ENCODE measurements at regions of chr12 and their contacts with region 1.

Region 1: GRCh38 chr12:26097046-26097878 is 27.6 kb downstream of the BHLHE41 start:
- DNase-seq: peak; percentile 73
- H3K4me3 Mint-ChIP-seq: no peak overlapping the region
- H3K27ac Mint-ChIP-seq: no peak overlapping the region
- H3K4me1 Mint-ChIP-seq: no peaks in the 10 kb centered on the region
- H3K27me3 Mint-ChIP-seq: peaks cover 8% of the 10 kb centered on the region

Region 2: GRCh38 chr12:25979563-25979962 is 117.7 kb before region 1 on chr12:
- CTCF ChIA-PET with region 1: no interaction called
- intact Hi-C with region 1: no loop called
- DNase-seq: no peak
- H3K4me3 Mint-ChIP-seq: no peak overlapping the region
- H3K27ac Mint-ChIP-seq: no peak overlapping the region
- H3K4me1 Mint-ChIP-seq: no peaks in the 10 kb centered on the region
- H3K27me3 Mint-ChIP-seq: peaks cover 11% of the 10 kb centered on the region

Region 3: GRCh38 chr12:25997201-25997963 is 99.9 kb before region 1 on chr12:
- CTCF ChIA-PET with region 1: no interaction called
- intact Hi-C with region 1: no loop called
- DNase-seq: no peak
- H3K4me3 Mint-ChIP-seq: no peak overlapping the region
- H3K27ac Mint-ChIP-seq: no peak overlapping the region
- H3K4me1 Mint-ChIP-seq: no peaks in the 10 kb centered on the region
- H3K27me3 Mint-ChIP-seq: peaks cover 6% of the 10 kb centered on the region

Region 4: GRCh38 chr12:26396402-26396801 is 299.1 kb after region 1 on chr12:
- CTCF ChIA-PET with region 1: no interaction called
- intact Hi-C with region 1: loop called (anchors 5 kb)
- DNase-seq: no peak
- H3K4me3 Mint-ChIP-seq: no peak overlapping the region
- H3K27ac Mint-ChIP-seq: no peak overlapping the region
- H3K4me1 Mint-ChIP-seq: no peaks in the 10 kb centered on the region
- H3K27me3 Mint-ChIP-seq: no peaks in the 10 kb centered on the region

Region 5: GRCh38 chr12:26460361-26460760 is 363.1 kb after region 1 on chr12:
- CTCF ChIA-PET with region 1: no interaction called
- intact Hi-C with region 1: no loop called
- DNase-seq: no peak
- H3K4me3 Mint-ChIP-seq: no peak overlapping the region
- H3K27ac Mint-ChIP-seq: no peak overlapping the region
- H3K4me1 Mint-ChIP-seq: no peaks in the 10 kb centered on the region
- H3K27me3 Mint-ChIP-seq: no peaks in the 10 kb centered on the region

Region 6: DNA sequence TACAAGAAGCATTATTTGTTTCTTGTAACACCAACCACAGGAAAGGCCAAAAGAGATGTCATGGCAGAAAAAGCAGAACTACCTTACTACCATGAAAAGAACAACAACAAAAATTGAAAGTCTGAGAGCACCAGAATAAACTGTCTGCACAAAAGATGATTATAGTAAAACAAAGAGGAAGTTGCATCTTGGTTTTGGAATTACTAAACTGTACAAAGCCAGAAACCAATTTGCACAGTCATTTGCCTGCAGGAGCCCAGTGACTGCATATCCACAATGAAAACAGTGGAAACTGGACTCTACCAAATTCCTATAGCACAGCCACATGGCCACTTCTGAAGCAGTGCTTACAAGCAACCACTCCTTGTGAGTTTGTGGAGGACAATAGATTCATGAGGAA is 374.3 kb after region 1 on chr12:
- CTCF ChIA-PET with region 1: no interaction called
- intact Hi-C with region 1: loop called (anchors 1 kb)
- DNase-seq: peak; percentile 39
- H3K4me3 Mint-ChIP-seq: no peak overlapping the region
- H3K27ac Mint-ChIP-seq: peak overlapping the region; percentile 33
- H3K4me1 Mint-ChIP-seq: peaks cover 12% of the 10 kb centered on the region
- H3K27me3 Mint-ChIP-seq: no peaks in the 10 kb centered on the region

Region 7: DNA sequence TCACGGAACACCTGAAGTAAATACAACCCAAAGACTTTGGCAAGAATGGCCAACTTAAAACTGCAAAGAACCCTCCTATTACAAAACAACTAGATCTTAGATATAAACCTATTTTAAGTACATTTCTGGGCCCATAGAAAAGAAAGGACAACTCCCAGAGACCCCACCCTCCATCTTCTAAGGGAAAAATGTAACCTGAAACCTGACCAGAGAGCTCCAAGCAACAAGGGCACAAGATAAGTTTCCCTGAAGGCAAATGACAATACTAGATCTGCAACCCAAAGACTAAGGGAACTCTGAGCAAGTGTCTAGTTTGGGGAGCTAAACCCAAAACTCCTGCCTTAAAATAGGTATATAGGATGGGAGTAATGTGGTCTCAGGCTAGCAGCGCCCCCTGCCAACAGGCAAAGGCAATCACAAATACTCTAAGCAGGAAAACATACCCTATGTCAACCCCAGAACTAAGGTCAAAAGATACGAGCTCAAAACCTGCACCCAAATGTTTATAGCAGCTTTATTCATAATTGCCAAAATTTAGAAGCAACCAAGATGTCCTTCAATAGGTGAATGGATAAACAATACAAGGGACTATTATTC is 516.9 kb after region 1 on chr12:
- CTCF ChIA-PET with region 1: no interaction called
- intact Hi-C with region 1: loop called (anchors 1 kb)
- DNase-seq: peak; percentile 51
- H3K4me3 Mint-ChIP-seq: no peak overlapping the region
- H3K27ac Mint-ChIP-seq: no peak overlapping the region
- H3K4me1 Mint-ChIP-seq: no peaks in the 10 kb centered on the region
- H3K27me3 Mint-ChIP-seq: no peaks in the 10 kb centered on the region

Region 8: GRCh38 chr12:26701604-26702215 is 604.4 kb after region 1 on chr12:
- CTCF ChIA-PET with region 1: interaction called, 3 read pairs
- intact Hi-C with region 1: loop called (anchors 1 kb)
- DNase-seq: no peak
- H3K4me3 Mint-ChIP-seq: no peak overlapping the region
- H3K27ac Mint-ChIP-seq: no peak overlapping the region
- H3K4me1 Mint-ChIP-seq: no peaks in the 10 kb centered on the region
- H3K27me3 Mint-ChIP-seq: no peaks in the 10 kb centered on the region

Region 9: DNA sequence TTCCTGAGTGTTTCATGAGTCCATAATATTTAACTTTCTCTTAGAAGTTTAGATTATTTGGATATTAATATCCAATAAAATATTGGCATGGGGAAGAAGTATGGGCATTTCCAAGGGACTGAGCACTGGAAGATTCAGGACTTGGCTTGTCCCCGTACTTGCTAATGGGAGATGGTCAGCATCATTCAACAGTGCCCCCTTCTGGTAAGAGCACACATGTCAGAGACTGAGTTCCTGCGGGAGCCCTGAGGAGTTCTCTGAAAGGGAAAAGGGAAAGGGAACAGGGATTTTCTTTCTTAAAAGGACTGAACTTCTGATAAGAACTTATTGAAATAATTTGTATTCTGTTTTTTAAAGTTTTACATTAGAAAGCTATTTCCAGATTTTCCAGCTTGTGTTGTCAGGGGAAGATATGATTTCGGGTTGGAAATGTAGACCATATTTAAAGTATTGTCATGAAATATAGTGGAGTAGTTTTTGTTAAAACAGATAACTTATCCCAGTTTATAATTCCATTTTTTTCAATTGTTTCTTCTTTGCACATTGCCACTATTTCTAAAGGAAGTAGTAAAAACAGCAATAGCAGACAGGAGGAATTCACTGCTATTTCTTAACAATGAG is 1044.9 kb after region 1 on chr12:
- CTCF ChIA-PET with region 1: no interaction called
- intact Hi-C with region 1: loop called (anchors 1 kb)
- DNase-seq: peak; percentile 61
- H3K4me3 Mint-ChIP-seq: no peak overlapping the region
- H3K27ac Mint-ChIP-seq: no peak overlapping the region
- H3K4me1 Mint-ChIP-seq: peaks cover 10% of the 10 kb centered on the region
- H3K27me3 Mint-ChIP-seq: no peaks in the 10 kb centered on the region

Measured in activated naive CD4-positive, alpha-beta T cell treated with anti-CD3 and anti-CD28 coated beads for 36 hours (primary cell).